ENCODE measurements at regions of chr12 and their contacts with region 1.

Region 1: DNA sequence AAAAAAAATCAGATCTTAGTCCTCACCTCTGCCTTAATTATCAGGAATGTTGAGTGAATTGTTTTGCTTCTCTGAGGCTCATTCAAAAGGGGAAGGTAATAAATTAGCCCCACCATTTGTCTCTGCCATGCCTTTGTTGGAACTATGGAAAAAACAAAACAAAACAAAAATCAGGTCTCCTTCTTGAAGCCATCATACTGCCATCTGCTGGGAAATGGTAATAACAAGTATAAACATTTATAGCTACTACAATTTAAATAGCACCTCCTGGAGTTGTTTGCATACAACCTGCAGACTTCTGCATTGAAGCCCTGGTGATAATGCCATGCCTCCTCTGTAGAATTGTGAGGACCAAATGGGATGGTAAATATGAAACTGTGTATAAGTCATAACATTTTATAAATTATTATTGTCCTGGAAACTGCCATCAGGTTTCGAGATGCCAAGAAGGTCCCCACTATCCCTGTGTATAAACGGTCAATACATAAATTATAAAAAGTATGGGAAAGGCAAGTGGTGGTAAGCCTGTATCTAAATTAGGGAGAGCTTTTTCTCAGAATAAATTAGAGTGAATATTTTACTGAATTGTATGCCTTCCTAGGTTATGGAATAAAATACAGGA is 87.2 kb upstream of the FGD4 start:
- DNase-seq: no peak
- ATAC-seq: peak; percentile 62
- H3K4me3 Mint-ChIP-seq: no peak overlapping the region
- H3K27ac Mint-ChIP-seq: peak overlapping the region; percentile 68
- H3K4me1 Mint-ChIP-seq: peaks cover 8% of the 10 kb centered on the region
- H3K27me3 Mint-ChIP-seq: no peaks in the 10 kb centered on the region
- CTCF ChIP-seq: no peak

Region 2: GRCh38 chr12:31650927-31651326 is 661.2 kb before region 1 on chr12:
- CTCF ChIA-PET with region 1: interaction called, 49 read pairs
- POLR2A ChIA-PET with region 1: interaction called, 12 read pairs
- intact Hi-C with region 1: loop called (anchors 1 kb)
- DNase-seq: no peak
- ATAC-seq: no peak
- H3K4me3 Mint-ChIP-seq: no peak overlapping the region
- H3K27ac Mint-ChIP-seq: no peak overlapping the region
- H3K4me1 Mint-ChIP-seq: peaks cover 26% of the 10 kb centered on the region
- H3K27me3 Mint-ChIP-seq: no peaks in the 10 kb centered on the region
- CTCF ChIP-seq: no peak

Region 3: GRCh38 chr12:32062881-32063280 is 249.3 kb before region 1 on chr12:
- CTCF ChIA-PET with region 1: interaction called, 20 read pairs
- POLR2A ChIA-PET with region 1: interaction called, 5 read pairs
- intact Hi-C with region 1: loop called (anchors 1 kb)
- DNase-seq: no peak
- ATAC-seq: no peak
- H3K4me3 Mint-ChIP-seq: no peak overlapping the region
- H3K27ac Mint-ChIP-seq: no peak overlapping the region
- H3K4me1 Mint-ChIP-seq: peaks cover 14% of the 10 kb centered on the region
- H3K27me3 Mint-ChIP-seq: no peaks in the 10 kb centered on the region
- CTCF ChIP-seq: no peak

Region 4: DNA sequence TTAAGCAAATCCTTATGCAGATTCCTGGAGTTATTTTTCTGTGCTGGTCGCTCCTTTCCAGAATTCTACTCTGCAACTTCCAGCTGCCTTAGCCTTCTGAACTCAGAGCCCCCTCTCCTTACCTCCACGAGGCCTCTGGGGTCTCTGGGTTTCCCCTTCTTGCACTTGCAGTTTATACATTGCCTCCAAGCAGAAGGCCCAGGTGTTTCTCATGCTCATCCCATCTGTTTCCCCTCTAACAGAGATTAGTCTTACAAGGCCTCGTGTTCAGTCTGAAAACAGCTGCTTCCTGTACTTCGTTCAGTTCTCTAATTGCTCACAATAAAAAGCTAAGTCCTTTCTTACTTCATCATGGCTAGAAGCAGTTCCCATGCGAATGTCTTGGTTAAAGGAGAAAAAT is 47.2 kb before region 1 on chr12:
- CTCF ChIA-PET with region 1: interaction called, 10 read pairs
- POLR2A ChIA-PET with region 1: no interaction called
- intact Hi-C with region 1: loop called (anchors 1 kb)
- DNase-seq: peak; percentile 31
- ATAC-seq: peak; percentile 67
- H3K4me3 Mint-ChIP-seq: peak overlapping the region; percentile 52
- H3K27ac Mint-ChIP-seq: peak overlapping the region; percentile 97
- H3K4me1 Mint-ChIP-seq: peaks cover 43% of the 10 kb centered on the region
- H3K27me3 Mint-ChIP-seq: no peaks in the 10 kb centered on the region
- CTCF ChIP-seq: no peak

Measured in activated B cell treated with CpG ODN at 0.5 μM for 24 hours (primary cell).